Activated T-helper 2 cell treated with anti-CD3 and anti-CD28 coated beads, Interferon-gamma antibody, Interleukin-2, Interleukin-4, amounts not matched to agents 10 μg/mL and 5 μg/mL and 100 μg/mL, durations not matched to agents 14 hours and 24 hours and 36 hours (primary cell): ENCODE measurements at regions of chr14 and their contacts with region 1.

Region 1: GRCh38 chr14:73290279-73290678 is 53.0 kb downstream of the PAPLN start:
- DNase-seq: no peak
- H3K4me3 Mint-ChIP-seq: no peak overlapping the region
- H3K27ac Mint-ChIP-seq: peak overlapping the region; percentile 24
- H3K4me1 Mint-ChIP-seq: peaks cover 36% of the 10 kb centered on the region
- H3K27me3 Mint-ChIP-seq: no peaks in the 10 kb centered on the region

Region 2: GRCh38 chr14:72000907-72001306 is 1289.4 kb before region 1 on chr14:
- intact Hi-C with region 1: no loop called
- DNase-seq: no peak
- H3K4me3 Mint-ChIP-seq: no peak overlapping the region
- H3K27ac Mint-ChIP-seq: no peak overlapping the region
- H3K4me1 Mint-ChIP-seq: peaks cover 1% of the 10 kb centered on the region
- H3K27me3 Mint-ChIP-seq: peaks cover 2% of the 10 kb centered on the region

Region 3: DNA sequence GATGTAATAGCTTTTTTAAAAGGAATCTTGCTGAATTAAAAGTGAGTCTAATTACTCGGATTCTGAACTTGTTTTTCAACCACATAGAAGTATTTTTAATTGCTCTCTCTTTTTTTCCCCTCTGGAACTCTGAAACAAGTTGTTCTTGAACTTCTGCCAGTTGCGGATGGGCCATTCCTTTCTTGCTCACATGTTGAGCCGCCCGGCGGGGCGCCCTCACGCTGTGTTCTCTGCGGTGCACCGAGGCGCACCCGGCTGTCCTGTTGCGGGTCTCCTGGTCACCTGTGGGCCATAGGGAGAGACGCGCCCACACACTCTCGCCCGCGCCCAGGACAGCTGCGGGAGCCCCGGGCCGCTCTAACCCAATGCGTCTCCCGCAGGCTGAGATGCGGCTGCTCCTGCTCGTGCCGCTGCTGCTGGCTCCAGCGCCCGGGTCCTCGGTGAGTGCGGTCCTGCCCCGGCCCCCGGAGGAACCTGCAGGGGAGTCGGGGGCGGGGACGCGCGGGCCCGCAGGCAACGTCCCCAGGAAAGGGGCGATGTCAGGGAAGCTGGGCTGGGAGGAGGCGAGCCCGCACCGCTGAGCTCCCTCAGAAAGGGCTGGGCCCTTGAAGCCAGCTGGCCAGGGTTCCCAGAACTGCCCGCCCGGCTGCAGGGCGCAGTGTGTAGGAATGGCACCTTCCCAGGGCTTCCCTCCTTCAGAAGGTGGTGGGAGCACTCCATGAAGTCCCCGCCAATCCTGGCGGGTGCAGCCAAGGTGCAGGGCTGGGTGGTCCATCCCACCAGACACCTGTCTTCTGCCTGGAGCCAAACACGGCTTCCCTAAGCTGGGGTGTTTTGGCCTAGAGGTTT is 50.7 kb before region 1 on chr14:
- intact Hi-C with region 1: loop called (anchors 5 kb)
- DNase-seq: no peak
- H3K4me3 Mint-ChIP-seq: peak overlapping the region; percentile 17
- H3K27ac Mint-ChIP-seq: no peak overlapping the region
- H3K4me1 Mint-ChIP-seq: peaks cover 23% of the 10 kb centered on the region
- H3K27me3 Mint-ChIP-seq: peaks cover 79% of the 10 kb centered on the region

Region 4: GRCh38 chr14:73392329-73393257 is 102.3 kb after region 1 on chr14:
- intact Hi-C with region 1: loop called (anchors 5 kb)
- DNase-seq: no peak
- H3K4me3 Mint-ChIP-seq: no peak overlapping the region
- H3K27ac Mint-ChIP-seq: no peak overlapping the region
- H3K4me1 Mint-ChIP-seq: peaks cover 18% of the 10 kb centered on the region
- H3K27me3 Mint-ChIP-seq: no peaks in the 10 kb centered on the region

Region 5: GRCh38 chr14:73467377-73467776 is 177.1 kb after region 1 on chr14:
- intact Hi-C with region 1: loop called (anchors 1 kb)
- DNase-seq: no peak
- H3K4me3 Mint-ChIP-seq: peak overlapping the region; percentile 60
- H3K27ac Mint-ChIP-seq: peak overlapping the region; percentile 91
- H3K4me1 Mint-ChIP-seq: peaks cover 53% of the 10 kb centered on the region
- H3K27me3 Mint-ChIP-seq: peaks cover 2% of the 10 kb centered on the region